ENCODE measurements at regions of chr20 and their contacts with region 1.

Region 1: DNA sequence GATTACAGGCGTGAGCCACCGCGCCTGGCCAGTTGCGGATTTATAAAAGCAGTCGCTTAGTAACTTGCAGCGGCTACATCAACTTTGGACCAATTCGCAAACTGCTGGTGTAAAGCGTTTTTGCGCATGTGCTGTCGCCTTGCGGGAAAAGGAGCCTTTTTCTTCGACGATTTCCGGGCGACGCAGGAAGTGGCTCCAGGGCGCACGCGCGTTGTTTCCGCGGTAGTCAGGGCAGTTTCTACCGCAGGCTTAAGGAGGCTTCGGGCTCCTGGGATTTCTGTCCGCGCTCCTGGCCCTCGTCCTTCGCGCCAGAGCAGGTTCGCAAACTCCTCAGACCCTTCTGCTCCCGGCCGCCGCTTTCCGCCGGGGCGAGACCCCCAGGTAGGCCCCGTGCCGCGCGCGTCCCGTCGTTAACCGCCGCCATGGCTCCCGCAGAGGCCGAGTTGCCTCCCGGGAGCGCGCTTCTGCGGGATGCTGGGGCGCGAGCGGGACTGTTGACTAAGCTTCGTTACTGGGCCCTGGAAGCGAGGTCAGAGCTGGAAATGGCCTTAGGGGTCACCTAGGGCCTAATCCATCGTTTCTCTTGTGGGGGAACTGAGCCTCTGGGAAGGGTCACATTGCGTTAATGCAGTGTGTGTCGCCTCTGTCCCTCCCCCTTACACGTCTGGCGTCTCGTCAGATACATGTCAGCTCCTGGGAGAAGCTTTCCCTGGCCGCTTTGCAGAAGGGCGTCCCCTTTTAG is at the start of gene RAE1:
- DNase-seq: peak; percentile 90
- CTCF ChIP-seq: no peak

Region 2: GRCh38 chr20:57089691-57090150 is 261.5 kb before region 1 on chr20:
- CTCF ChIA-PET with region 1: interaction called, 105 read pairs
- POLR2A ChIA-PET with region 1: no interaction called
- DNase-seq: peak; percentile 80
- CTCF ChIP-seq: peak; percentile 90

Region 3: GRCh38 chr20:57317789-57318371 is 33.3 kb before region 1 on chr20:
- CTCF ChIA-PET with region 1: no interaction called
- POLR2A ChIA-PET with region 1: no interaction called
- DNase-seq: no peak
- CTCF ChIP-seq: no peak

Region 4: DNA sequence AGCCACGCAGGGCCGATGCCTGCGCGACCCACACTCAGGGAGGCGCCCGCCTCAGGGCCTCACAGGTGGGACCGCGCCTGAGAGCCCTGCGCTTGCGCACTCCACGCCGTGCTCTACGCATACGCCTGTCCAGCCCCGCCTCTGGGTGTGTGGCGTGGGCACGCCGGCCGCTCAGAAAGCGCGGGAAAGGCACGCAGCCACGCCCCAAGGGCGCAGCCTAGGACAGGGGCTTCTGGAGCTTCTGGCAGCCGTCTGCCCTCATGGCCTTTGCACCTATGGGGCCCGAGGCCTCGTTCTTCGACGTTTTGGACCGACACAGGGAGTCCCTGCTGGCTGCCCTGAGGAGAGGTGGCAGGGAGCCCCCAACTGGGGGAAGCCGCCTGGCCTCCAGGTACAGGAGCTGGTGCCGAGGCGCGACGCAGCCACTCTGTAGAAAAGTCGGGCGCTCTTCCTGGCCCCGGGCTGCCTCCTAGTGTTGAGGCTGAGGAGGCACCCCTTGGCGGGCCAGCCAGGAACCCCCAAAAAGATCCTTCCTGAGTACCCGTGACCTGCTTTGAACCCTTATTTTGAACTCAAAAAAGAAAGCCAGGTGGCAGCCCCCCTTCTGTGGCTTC is 21.5 kb before region 1 on chr20 and contains the start of gene SPO11:
- CTCF ChIA-PET with region 1: interaction called, 36 read pairs
- POLR2A ChIA-PET with region 1: no interaction called
- DNase-seq: no peak
- CTCF ChIP-seq: peak; percentile 16